ENCODE measurements at regions of chr20 and their contacts with region 1.

Region 1: GRCh38 chr20:51500311-51500710 is 42.2 kb downstream of the NFATC2 start:
- DNase-seq: peak in 7 of 9 experiments; percentile 38 to 92 (median 66)
- ATAC-seq: peak; percentile 83
- H3K4me3 ChIP-seq: no peak overlapping the region
- H3K4me3 Mint-ChIP-seq: no peak overlapping the region
- H3K27ac ChIP-seq: peak overlapping the region in 1 of 2 experiments; percentile 69
- H3K27ac Mint-ChIP-seq: peak overlapping the region; percentile 90
- H3K4me1 ChIP-seq: peaks cover 67% of the 10 kb centered on the region
- H3K4me1 Mint-ChIP-seq: peaks cover 86% of the 10 kb centered on the region
- H3K27me3 ChIP-seq: no peaks in the 10 kb centered on the region
- H3K27me3 Mint-ChIP-seq: no peaks in the 10 kb centered on the region
- CTCF ChIP-seq: no peak

Region 2: GRCh38 chr20:51404298-51405060 is 95.8 kb before region 1 on chr20:
- CTCF ChIA-PET with region 1: interaction called, 3 read pairs
- POLR2A ChIA-PET with region 1: interaction called, 4 read pairs
- intact Hi-C with region 1: loop called (anchors 2 to 5 kb)
- DNase-seq: peak; percentile 71 to 96 (median 84)
- ATAC-seq: peak; percentile 73
- H3K4me3 ChIP-seq: no peak overlapping the region
- H3K4me3 Mint-ChIP-seq: no peak overlapping the region
- H3K27ac ChIP-seq: peak overlapping the region; percentile 62 to 99
- H3K27ac Mint-ChIP-seq: peak overlapping the region; percentile 99
- H3K4me1 ChIP-seq: peaks cover 61% of the 10 kb centered on the region
- H3K4me1 Mint-ChIP-seq: peaks cover 76% of the 10 kb centered on the region
- H3K27me3 ChIP-seq: no peaks in the 10 kb centered on the region
- H3K27me3 Mint-ChIP-seq: no peaks in the 10 kb centered on the region
- CTCF ChIP-seq: no peak

Region 3: GRCh38 chr20:51480507-51481270 is 19.6 kb before region 1 on chr20:
- CTCF ChIA-PET with region 1: interaction called, 3 read pairs
- POLR2A ChIA-PET with region 1: interaction called, 5 read pairs
- intact Hi-C with region 1: loop called in 1 of 2 experiments (anchors 2 kb)
- DNase-seq: peak in 4 of 9 experiments; percentile 18 to 85 (median 62)
- ATAC-seq: peak; percentile 56
- H3K4me3 ChIP-seq: peak overlapping the region in 1 of 2 experiments; percentile 13
- H3K4me3 Mint-ChIP-seq: peak overlapping the region; percentile 61
- H3K27ac ChIP-seq: peak overlapping the region in 1 of 2 experiments; percentile 83
- H3K27ac Mint-ChIP-seq: peak overlapping the region; percentile 90
- H3K4me1 ChIP-seq: peaks cover 32% of the 10 kb centered on the region
- H3K4me1 Mint-ChIP-seq: peaks cover 83% of the 10 kb centered on the region
- H3K27me3 ChIP-seq: no peaks in the 10 kb centered on the region
- H3K27me3 Mint-ChIP-seq: no peaks in the 10 kb centered on the region
- CTCF ChIP-seq: no peak

Region 4: DNA sequence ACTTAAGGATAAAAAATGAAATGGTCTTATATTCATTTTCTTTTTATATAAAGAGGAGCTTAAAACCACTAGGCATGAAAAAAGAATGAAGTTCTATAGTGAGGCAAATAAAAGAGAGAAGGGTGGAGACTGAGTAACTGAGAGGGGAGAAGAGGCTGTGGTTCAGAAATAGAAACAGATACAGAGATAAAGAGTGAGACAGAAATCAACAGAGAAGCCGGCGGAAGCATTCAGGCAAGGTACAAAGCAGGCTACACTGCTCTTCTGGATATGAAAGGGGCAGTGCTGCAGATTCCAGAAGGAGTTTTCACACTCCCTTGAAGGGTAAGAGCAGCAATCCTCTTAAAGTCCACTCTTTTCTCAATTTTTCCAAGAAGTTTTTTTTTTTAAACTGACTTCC is 12.3 kb after region 1 on chr20:
- CTCF ChIA-PET with region 1: interaction called, 4 read pairs
- POLR2A ChIA-PET with region 1: interaction called, 11 read pairs
- intact Hi-C with region 1: loop called (anchors 1 to 2 kb)
- DNase-seq: peak in 2 of 9 experiments; percentile 39 to 56
- ATAC-seq: peak; percentile 75
- H3K4me3 ChIP-seq: no peak overlapping the region
- H3K4me3 Mint-ChIP-seq: peak overlapping the region; percentile 13
- H3K27ac ChIP-seq: peak overlapping the region in 1 of 2 experiments; percentile 63
- H3K27ac Mint-ChIP-seq: peak overlapping the region; percentile 89
- H3K4me1 ChIP-seq: peaks cover 55% of the 10 kb centered on the region
- H3K4me1 Mint-ChIP-seq: peaks cover 70% of the 10 kb centered on the region
- H3K27me3 ChIP-seq: no peaks in the 10 kb centered on the region
- H3K27me3 Mint-ChIP-seq: no peaks in the 10 kb centered on the region
- CTCF ChIP-seq: no peak

Region 5: GRCh38 chr20:51529081-51529681 is 28.9 kb after region 1 on chr20:
- CTCF ChIA-PET with region 1: interaction called, 5 read pairs
- POLR2A ChIA-PET with region 1: no interaction called
- intact Hi-C with region 1: loop called in 1 of 2 experiments (anchors 2 kb)
- DNase-seq: peak in 5 of 9 experiments; percentile 26 to 70 (median 44)
- ATAC-seq: peak; percentile 3
- H3K4me3 ChIP-seq: peak overlapping the region in 1 of 2 experiments; percentile 10
- H3K4me3 Mint-ChIP-seq: peak overlapping the region; percentile 58
- H3K27ac ChIP-seq: peak overlapping the region; percentile 19 to 81
- H3K27ac Mint-ChIP-seq: peak overlapping the region; percentile 83
- H3K4me1 ChIP-seq: peaks cover 96% of the 10 kb centered on the region
- H3K4me1 Mint-ChIP-seq: peaks cover 92% of the 10 kb centered on the region
- H3K27me3 ChIP-seq: no peaks in the 10 kb centered on the region
- H3K27me3 Mint-ChIP-seq: no peaks in the 10 kb centered on the region
- CTCF ChIP-seq: no peak

Measured in CD8-positive, alpha-beta T cell (primary cell).